ENCODE measurements at regions of chr14 and their contacts with region 1.

Region 1: DNA sequence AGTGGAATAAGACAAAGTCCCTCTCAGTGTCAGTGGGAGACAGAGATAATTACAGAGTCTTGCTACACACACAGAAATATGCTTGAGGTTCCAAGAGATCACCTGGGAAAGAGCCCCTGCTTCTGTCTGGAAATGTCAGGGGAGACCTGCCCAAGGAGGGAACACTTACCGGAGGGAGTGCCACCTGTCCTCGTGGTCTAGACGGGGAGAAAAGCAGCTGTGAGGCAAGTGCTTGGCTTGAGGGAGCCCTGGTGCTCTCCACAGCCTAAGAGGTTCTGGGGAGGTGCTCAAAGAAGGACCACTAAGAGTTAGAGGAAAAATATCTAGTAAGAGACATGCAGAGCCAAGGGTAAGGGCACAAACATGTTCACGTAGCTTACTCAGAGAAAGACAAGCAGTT is 38.1 kb upstream of the GNPNAT1 start:
- DNase-seq: no peak
- H3K4me3 ChIP-seq: no peak overlapping the region
- H3K27ac ChIP-seq: no peak overlapping the region
- H3K4me1 ChIP-seq: no peaks in the 10 kb centered on the region
- H3K27me3 ChIP-seq: no peaks in the 10 kb centered on the region
- CTCF ChIP-seq: no peak
- POLR2A ChIP-seq: no peak

Region 2: GRCh38 chr14:52755607-52756253 is 73.8 kb before region 1 on chr14:
- intact Hi-C with region 1: no loop called
- DNase-seq: no peak
- H3K4me3 ChIP-seq: no peak overlapping the region
- H3K27ac ChIP-seq: no peak overlapping the region
- H3K4me1 ChIP-seq: no peaks in the 10 kb centered on the region
- H3K27me3 ChIP-seq: no peaks in the 10 kb centered on the region
- CTCF ChIP-seq: no peak
- POLR2A ChIP-seq: no peak

Region 3: DNA sequence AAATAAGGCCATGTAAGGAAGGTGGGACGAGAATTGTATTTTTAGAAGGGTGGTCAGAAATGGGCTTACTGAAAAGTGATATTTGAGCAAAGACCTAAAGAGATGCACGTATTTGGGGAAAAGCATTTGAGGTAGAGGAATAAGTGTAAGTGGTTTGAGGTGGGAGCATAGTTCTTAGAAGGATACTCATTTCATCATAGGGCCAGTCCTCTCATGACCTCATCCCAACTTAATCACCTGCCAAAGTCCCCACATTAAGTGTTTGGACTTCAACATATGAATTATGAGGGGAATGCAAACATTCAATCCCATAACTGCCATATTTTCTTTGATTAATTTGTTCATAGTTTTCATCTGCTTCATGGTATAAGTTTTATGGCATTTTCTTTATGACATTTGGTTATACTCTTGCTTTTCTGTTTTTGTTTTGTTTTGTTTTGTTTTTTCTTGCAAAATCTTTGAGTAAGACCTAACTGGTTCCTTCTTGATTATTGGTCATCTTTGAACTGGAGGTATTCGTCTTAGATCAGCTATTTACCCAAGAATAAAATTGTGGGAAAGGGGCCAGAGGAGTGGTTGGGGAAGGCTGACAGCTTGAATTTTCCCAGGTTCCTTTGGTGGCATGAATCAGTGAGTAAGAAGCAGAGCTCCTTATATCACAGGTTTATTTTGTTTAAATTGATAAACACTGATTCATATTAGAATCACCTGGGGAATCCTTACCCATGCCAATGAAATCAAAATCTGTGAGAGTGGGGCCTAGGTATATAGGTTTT is 62.3 kb before region 1 on chr14:
- intact Hi-C with region 1: loop called (anchors 2 kb)
- DNase-seq: no peak
- H3K4me3 ChIP-seq: no peak overlapping the region
- H3K27ac ChIP-seq: no peak overlapping the region
- H3K4me1 ChIP-seq: no peaks in the 10 kb centered on the region
- H3K27me3 ChIP-seq: no peaks in the 10 kb centered on the region
- CTCF ChIP-seq: no peak
- POLR2A ChIP-seq: no peak

Region 4: GRCh38 chr14:52791203-52792096 is 38.1 kb before region 1 on chr14 and contains the start of gene GNPNAT1:
- intact Hi-C with region 1: no loop called
- DNase-seq: peak; percentile 70 to 79
- H3K4me3 ChIP-seq: peak within 1 kb of the TSS; percentile 73 to 87 (median 78)
- H3K27ac ChIP-seq: peak within 1 kb of the TSS; percentile 91 to 96
- H3K4me1 ChIP-seq: no peaks in the 10 kb centered on the region
- H3K27me3 ChIP-seq: no peaks in the 10 kb centered on the region
- CTCF ChIP-seq: no peak
- POLR2A ChIP-seq: no peak
- total RNA-seq, gene GNPNAT1: 13.1 to 21.2 (median 18.7) TPM

Region 5: DNA sequence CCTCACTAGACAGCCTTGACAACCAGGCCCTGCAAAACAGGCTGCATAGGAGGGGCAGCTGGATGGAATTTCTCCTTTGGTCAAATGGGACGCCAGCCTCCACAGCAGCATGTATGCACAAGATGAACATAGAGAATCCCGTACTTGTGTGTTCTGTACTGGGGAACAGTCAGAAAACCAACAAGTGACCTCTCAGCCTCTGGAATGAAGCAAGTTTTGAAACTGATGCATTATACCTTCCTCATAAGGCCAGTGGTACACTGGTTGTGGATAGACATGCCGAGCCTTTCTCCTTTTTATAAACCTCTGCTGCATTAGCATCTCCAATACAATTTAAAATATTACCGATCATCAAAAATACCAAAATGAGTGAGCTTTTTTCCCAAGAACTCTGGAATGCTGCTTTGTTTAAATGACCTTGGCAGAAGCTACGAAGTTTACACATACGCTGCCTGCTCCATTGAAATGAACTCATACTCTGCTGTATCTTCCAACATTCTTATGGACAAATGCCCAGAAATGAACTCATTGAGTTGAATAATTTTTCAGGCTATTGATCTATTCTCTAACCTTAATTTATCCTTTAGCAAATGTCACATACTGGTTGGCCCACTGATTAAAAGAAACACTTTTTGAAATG is 169.0 kb after region 1 on chr14:
- intact Hi-C with region 1: no loop called
- DNase-seq: no peak
- H3K4me3 ChIP-seq: no peak overlapping the region
- H3K27ac ChIP-seq: no peak overlapping the region
- H3K4me1 ChIP-seq: no peaks in the 10 kb centered on the region
- H3K27me3 ChIP-seq: no peaks in the 10 kb centered on the region
- CTCF ChIP-seq: no peak
- POLR2A ChIP-seq: no peak